ENCODE measurements at regions of chr7 and their contacts with region 1.

Region 1: GRCh38 chr7:101146-102046 is 91.0 kb upstream of the FAM20C start:
- DNase-seq: peak; percentile 50 to 93
- H3K4me3 ChIP-seq: no peak overlapping the region
- H3K27ac ChIP-seq: peak overlapping the region; percentile 63
- H3K4me1 ChIP-seq: peaks cover 33% of the 10 kb centered on the region
- H3K27me3 ChIP-seq: no peaks in the 10 kb centered on the region
- CTCF ChIP-seq: no peak

Region 2: DNA sequence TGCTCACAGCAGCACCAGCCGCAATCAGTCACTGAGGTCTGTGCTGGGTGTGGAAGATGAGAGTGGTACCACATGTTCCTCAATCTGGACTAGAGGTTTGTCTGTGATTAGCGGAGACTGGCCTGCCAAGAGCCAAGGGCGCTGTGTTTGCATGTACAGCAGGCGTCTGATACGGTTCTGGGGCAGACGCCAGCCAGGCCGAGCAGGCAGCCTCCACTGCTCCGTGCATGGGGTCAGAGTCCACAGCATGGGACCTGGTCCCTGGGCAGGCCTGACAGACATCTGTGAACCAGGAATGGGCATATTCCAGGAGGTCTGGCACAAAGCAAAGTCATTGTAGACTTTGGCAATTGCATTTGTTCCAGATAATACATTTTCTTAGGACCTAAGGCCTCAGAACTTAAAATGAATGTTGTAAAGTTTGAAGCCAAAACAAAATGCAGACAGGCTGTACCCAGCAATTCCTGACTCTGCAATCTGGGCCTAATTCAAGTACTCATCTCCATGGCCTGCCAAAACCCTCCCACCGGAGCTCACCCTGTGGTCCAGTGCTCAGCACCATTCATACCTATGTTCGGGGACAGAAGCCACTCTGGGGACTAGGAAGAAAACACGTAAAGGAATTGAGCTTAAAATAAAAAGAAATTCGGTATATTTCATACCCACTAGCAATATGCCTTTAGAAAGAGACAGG is 41.0 kb after region 1 on chr7:
- CTCF ChIA-PET with region 1: no interaction called
- POLR2A ChIA-PET with region 1: no interaction called
- intact Hi-C with region 1: loop called (anchors 5 kb)
- DNase-seq: no peak
- H3K4me3 ChIP-seq: no peak overlapping the region
- H3K27ac ChIP-seq: no peak overlapping the region
- H3K4me1 ChIP-seq: no peaks in the 10 kb centered on the region
- H3K27me3 ChIP-seq: no peaks in the 10 kb centered on the region
- CTCF ChIP-seq: no peak

Region 3: DNA sequence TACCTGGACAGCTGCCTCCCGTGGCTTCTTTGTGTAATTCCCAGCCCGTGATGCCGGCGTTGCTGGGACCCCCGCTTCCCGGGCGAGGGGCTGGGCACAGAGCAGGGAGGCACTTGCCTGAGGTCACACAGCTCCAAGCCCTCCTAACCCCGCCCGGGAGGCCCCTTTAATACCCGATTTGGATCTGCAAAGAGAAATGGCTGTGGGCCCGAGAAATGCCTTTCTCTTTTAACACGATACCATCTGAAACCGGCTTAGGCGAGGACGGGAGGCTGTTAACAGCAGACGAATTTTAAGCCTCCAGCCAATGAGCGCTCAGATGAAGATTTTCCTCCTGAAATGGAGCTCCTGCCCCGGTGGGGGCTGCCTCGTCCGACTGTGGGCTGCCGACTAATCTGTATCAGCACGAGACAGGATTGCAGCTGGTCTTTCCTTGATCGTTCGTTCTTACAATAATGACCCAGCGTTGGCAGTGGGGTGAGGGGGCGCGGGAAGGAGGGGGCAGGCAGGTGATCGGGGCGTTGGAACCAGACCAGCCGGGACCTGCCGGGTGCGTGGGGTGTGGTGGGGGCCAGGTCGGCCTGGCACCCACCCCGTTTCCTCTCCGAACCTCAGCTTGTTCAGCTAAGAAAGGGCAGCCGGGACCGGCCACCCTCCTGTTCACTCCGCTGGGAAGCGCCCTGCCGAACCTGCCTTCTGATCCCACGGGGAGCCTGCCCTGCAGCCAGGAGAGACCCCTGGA is 152.4 kb after region 1 on chr7:
- CTCF ChIA-PET with region 1: no interaction called
- POLR2A ChIA-PET with region 1: no interaction called
- intact Hi-C with region 1: no loop called
- DNase-seq: no peak
- H3K4me3 ChIP-seq: no peak overlapping the region
- H3K27ac ChIP-seq: no peak overlapping the region
- H3K4me1 ChIP-seq: no peaks in the 10 kb centered on the region
- H3K27me3 ChIP-seq: no peaks in the 10 kb centered on the region
- CTCF ChIP-seq: no peak

Region 4: DNA sequence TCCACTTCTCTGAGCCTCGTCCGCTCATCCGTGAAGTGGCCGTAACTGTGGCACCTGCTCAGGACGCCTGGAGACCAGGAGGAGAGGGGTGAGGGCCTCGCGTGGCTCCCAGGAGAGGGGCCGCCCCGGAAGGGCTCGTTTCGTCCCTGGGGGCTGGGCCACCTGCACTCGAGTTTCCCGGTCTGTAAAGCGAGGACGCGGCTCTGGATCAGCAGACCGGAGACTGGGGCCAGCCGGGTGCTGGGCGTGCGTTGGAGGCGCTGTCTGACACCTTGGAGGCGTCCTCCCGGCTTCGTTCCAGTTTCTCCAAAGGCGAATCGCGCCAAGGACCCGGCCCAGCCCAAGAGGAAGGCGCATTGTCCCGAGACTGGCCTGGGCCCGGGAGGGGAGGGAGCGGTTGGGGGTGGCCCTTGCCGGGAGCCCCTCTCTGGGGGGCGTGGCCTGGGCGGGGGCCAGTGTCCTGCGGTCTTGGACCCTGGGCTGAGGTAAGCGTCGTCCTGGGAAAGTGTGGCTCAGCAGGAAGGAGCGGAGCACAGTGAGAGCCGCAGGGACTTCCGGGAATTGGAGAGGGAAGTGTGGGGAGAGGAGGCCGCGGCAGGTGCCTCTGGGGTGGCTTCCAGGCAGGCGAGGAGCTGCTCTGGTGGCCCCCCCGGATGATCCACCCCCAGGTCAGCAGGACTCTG is 278.2 kb after region 1 on chr7:
- CTCF ChIA-PET with region 1: no interaction called
- POLR2A ChIA-PET with region 1: no interaction called
- intact Hi-C with region 1: no loop called
- DNase-seq: no peak
- H3K4me3 ChIP-seq: no peak overlapping the region
- H3K27ac ChIP-seq: no peak overlapping the region
- H3K4me1 ChIP-seq: no peaks in the 10 kb centered on the region
- H3K27me3 ChIP-seq: peaks cover 95% of the 10 kb centered on the region
- CTCF ChIP-seq: no peak